B cell (primary cell): ENCODE measurements at regions of chr5 and their contacts with region 1.

Region 1: GRCh38 chr5:72816311-72817145 is at the start of gene TNPO1:
- DNase-seq: peak; percentile 94
- ATAC-seq: peak; percentile 79
- H3K4me3 ChIP-seq: peak within 1 kb of the TSS; percentile 81 to 89 (median 82)
- H3K4me3 Mint-ChIP-seq: peak within 1 kb of the TSS; percentile 92
- H3K27ac ChIP-seq: peak within 1 kb of the TSS; percentile 91 to 99
- H3K27ac Mint-ChIP-seq: peak within 1 kb of the TSS; percentile 94
- H3K4me1 ChIP-seq: peaks cover 17 to 20% of the 10 kb centered on the region in 2 donors
- H3K4me1 Mint-ChIP-seq: peaks cover 23% of the 10 kb centered on the region
- H3K27me3 ChIP-seq: peaks cover 0 to 7% (median 0%) of the 10 kb centered on the region in 4 experiments
- H3K27me3 Mint-ChIP-seq: peaks cover 14% of the 10 kb centered on the region
- CTCF ChIP-seq: no peak
- total RNA-seq, gene TNPO1: 102 and 107 TPM in 2 replicates

Region 2: GRCh38 chr5:72307968-72308852 is 508.3 kb before region 1 on chr5:
- CTCF ChIA-PET with region 1: no interaction called
- POLR2A ChIA-PET with region 1: no interaction called
- intact Hi-C with region 1: loop called (anchors 5 kb)
- DNase-seq: peak; percentile 98
- ATAC-seq: peak; percentile 93
- H3K4me3 ChIP-seq: peak overlapping the region; percentile 77 to 93 (median 86)
- H3K4me3 Mint-ChIP-seq: peak overlapping the region; percentile 96
- H3K27ac ChIP-seq: peak overlapping the region; percentile 95 to 96
- H3K27ac Mint-ChIP-seq: peak overlapping the region; percentile 99
- H3K4me1 ChIP-seq: peaks cover 12 to 29% of the 10 kb centered on the region in 2 donors
- H3K4me1 Mint-ChIP-seq: peaks cover 38% of the 10 kb centered on the region
- H3K27me3 ChIP-seq: no peaks in the 10 kb centered on the region
- H3K27me3 Mint-ChIP-seq: no peaks in the 10 kb centered on the region
- CTCF ChIP-seq: peak; percentile 89

Region 3: DNA sequence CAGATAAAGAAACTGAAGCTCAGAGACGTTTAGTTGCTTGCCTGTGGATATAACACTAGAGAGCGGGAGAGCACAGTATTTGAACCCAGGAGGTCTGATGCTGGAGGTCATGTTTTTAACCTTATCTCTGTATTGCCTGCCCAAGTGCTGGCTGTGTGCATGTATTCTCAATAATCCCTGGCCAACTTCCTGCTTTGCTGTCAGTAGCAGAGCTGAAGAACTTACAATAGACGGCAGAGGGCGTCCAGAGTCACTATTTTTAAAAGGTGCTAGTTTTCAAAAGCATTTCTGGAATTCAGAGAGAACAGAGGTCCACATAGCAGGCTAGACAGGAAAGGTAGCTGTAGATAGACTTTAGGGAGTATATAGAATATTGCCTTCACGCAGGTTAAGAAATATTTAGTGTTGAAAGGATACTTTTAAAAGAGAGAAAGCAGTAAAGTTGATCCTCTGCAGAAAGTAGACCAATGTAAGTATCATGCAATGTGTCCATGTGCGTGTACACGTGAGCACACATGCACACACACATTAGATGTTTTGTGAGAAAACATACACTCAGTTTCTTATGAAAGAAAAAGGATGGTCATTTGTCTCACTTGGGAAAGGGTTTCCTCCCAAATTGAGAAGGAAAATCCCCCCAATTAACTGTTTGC is 450.1 kb before region 1 on chr5:
- CTCF ChIA-PET with region 1: interaction called, 4 read pairs
- POLR2A ChIA-PET with region 1: no interaction called
- intact Hi-C with region 1: loop called (anchors 1 kb)
- DNase-seq: peak; percentile 69
- ATAC-seq: peak; percentile 64
- H3K4me3 ChIP-seq: no peak overlapping the region
- H3K4me3 Mint-ChIP-seq: no peak overlapping the region
- H3K27ac ChIP-seq: no peak overlapping the region
- H3K27ac Mint-ChIP-seq: no peak overlapping the region
- H3K4me1 ChIP-seq: no peaks in the 10 kb centered on the region
- H3K4me1 Mint-ChIP-seq: peaks cover 7% of the 10 kb centered on the region
- H3K27me3 ChIP-seq: no peaks in the 10 kb centered on the region
- H3K27me3 Mint-ChIP-seq: no peaks in the 10 kb centered on the region
- CTCF ChIP-seq: peak; percentile 74

Region 4: DNA sequence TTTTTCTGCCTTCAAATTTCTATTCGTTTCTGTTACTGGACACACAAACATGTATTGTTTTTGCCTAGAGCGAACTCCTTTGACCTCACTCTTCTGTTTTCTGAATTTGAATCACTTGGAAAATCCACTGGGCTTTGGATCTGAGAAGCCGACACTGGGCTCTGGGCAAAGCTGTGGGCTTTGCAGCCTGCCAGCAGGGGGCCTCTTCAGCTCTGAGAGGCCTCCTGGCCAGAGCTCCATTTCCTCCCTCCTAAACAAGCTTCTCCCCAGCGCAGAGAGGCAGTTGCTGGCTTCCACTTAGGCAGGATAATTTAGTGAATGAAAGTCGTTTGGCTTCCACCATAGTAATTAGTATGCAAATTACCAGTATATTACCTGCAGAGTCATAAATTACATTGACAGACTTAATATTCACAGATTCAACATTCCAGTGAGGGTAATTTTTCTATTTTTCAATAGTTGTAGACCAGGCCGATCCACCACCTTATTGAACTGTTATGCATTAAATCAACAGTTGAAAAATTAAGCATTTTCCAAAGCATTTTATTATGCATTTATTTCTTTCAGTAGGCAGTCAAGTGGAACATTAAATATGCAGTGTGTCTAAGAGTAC is 205.3 kb before region 1 on chr5:
- CTCF ChIA-PET with region 1: interaction called, 64 read pairs
- POLR2A ChIA-PET with region 1: no interaction called
- intact Hi-C with region 1: loop called (anchors 1 kb)
- DNase-seq: peak; percentile 60
- ATAC-seq: peak; percentile 76
- H3K4me3 ChIP-seq: no peak overlapping the region
- H3K4me3 Mint-ChIP-seq: no peak overlapping the region
- H3K27ac ChIP-seq: no peak overlapping the region
- H3K27ac Mint-ChIP-seq: no peak overlapping the region
- H3K4me1 ChIP-seq: no peaks in the 10 kb centered on the region
- H3K4me1 Mint-ChIP-seq: no peaks in the 10 kb centered on the region
- H3K27me3 ChIP-seq: peaks cover 0 to 4% (median 0%) of the 10 kb centered on the region in 4 experiments
- H3K27me3 Mint-ChIP-seq: peaks cover 15% of the 10 kb centered on the region
- CTCF ChIP-seq: peak; percentile 87

Region 5: GRCh38 chr5:72847989-72848473 is 31.5 kb after region 1 on chr5:
- CTCF ChIA-PET with region 1: interaction called, 39 read pairs
- POLR2A ChIA-PET with region 1: interaction called, 14 read pairs
- intact Hi-C with region 1: loop called (anchors 1 kb)
- DNase-seq: peak; percentile 90
- ATAC-seq: peak; percentile 75
- H3K4me3 ChIP-seq: peak overlapping the region; percentile 75 to 96 (median 91)
- H3K4me3 Mint-ChIP-seq: peak overlapping the region; percentile 99
- H3K27ac ChIP-seq: peak overlapping the region; percentile 83 to 89
- H3K27ac Mint-ChIP-seq: peak overlapping the region; percentile 99
- H3K4me1 ChIP-seq: peaks cover 18 to 40% of the 10 kb centered on the region in 2 donors
- H3K4me1 Mint-ChIP-seq: peaks cover 54% of the 10 kb centered on the region
- H3K27me3 ChIP-seq: no peaks in the 10 kb centered on the region
- H3K27me3 Mint-ChIP-seq: no peaks in the 10 kb centered on the region
- CTCF ChIP-seq: no peak

Region 6: GRCh38 chr5:73498057-73499008 is 681.8 kb after region 1 on chr5 and contains the start of gene BTF3:
- CTCF ChIA-PET with region 1: no interaction called
- POLR2A ChIA-PET with region 1: no interaction called
- intact Hi-C with region 1: loop called (anchors 2 kb)
- DNase-seq: peak; percentile 96
- ATAC-seq: peak; percentile 95
- H3K4me3 ChIP-seq: peak within 1 kb of the TSS; percentile 60 to 98 (median 97)
- H3K4me3 Mint-ChIP-seq: peak within 1 kb of the TSS; percentile 99
- H3K27ac ChIP-seq: peak within 1 kb of the TSS; percentile 96 to 99
- H3K27ac Mint-ChIP-seq: peak within 1 kb of the TSS; percentile 99
- H3K4me1 ChIP-seq: peaks cover 19 to 33% of the 10 kb centered on the region in 2 donors
- H3K4me1 Mint-ChIP-seq: peaks cover 37% of the 10 kb centered on the region
- H3K27me3 ChIP-seq: no peaks in the 10 kb centered on the region
- H3K27me3 Mint-ChIP-seq: peaks cover 13% of the 10 kb centered on the region
- CTCF ChIP-seq: no peak
- total RNA-seq, gene BTF3: 452 and 466 TPM in 2 replicates

Region 7: DNA sequence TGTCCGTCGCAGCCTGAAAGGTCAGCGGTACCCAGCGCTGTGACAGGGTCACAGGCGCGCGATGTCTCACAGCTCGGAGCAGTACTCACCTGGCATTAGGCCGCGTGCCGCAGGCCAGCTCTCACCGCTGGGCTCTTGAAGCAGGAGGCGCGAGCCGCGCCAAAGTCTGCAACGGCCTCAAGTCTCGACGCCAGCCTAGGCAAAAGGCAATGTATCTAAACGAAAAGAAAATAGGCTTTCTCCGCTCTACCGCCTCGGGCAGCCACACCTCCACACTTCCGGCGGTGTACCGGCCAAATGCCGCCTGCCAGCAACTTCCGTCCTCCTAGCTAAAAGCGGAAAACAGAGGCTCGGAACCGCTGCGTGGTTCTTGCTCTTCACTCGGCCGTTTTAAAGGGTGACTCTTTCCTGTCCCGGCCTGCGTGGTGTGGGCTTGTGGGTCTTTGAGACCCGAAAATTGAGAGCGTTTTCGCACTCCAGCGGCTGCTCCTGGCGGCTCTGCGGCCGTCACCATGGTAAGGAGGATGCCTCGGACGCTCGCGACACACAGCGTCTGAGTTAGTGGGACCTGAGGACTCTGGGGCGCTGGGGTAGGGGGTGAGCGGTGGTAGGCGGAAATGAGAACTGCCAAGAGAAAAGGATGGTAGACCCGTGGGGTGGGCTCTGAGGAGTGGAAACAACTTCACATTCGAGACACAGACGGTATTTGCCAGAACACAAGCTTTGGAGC is 1950.5 kb after region 1 on chr5 and contains the starts of genes GFM2 and NSA2:
- CTCF ChIA-PET with region 1: no interaction called
- POLR2A ChIA-PET with region 1: no interaction called
- intact Hi-C with region 1: loop called (anchors 10 kb)
- DNase-seq: peak; percentile 95
- ATAC-seq: peak; percentile 89
- H3K4me3 ChIP-seq: peak within 1 kb of the TSS; percentile 71 to 99 (median 92)
- H3K4me3 Mint-ChIP-seq: peak within 1 kb of the TSS; percentile 100
- H3K27ac ChIP-seq: peak within 1 kb of the TSS; percentile 62 to 85
- H3K27ac Mint-ChIP-seq: peak within 1 kb of the TSS; percentile 98
- H3K4me1 ChIP-seq: peaks cover 20 to 21% of the 10 kb centered on the region in 2 donors
- H3K4me1 Mint-ChIP-seq: peaks cover 29% of the 10 kb centered on the region
- H3K27me3 ChIP-seq: no peaks in the 10 kb centered on the region
- H3K27me3 Mint-ChIP-seq: no peaks in the 10 kb centered on the region
- CTCF ChIP-seq: no peak
- total RNA-seq, gene GFM2: 22.6 and 28.5 TPM in 2 replicates
- total RNA-seq, gene NSA2: 126 and 129 TPM in 2 replicates